Aorta (tissue), 5 donors: ENCODE measurements at regions of chr1 and their contacts with region 1.

Region 1: GRCh38 chr1:168092566-168093355 is 44.0 kb downstream of the GPR161 start:
- DNase-seq: no peak
- ATAC-seq: no peak
- H3K4me3 ChIP-seq: no peak overlapping the region
- H3K27ac ChIP-seq: no peak overlapping the region
- H3K4me1 ChIP-seq: no peaks in the 10 kb centered on the region
- H3K27me3 ChIP-seq: no peaks in the 10 kb centered on the region

Region 2: GRCh38 chr1:168312718-168313604 is 220.2 kb after region 1 on chr1:
- intact Hi-C with region 1: loop called in 1 of 2 experiments (anchors 10 kb)
- DNase-seq: no peak
- ATAC-seq: no peak
- H3K4me3 ChIP-seq: no peak overlapping the region
- H3K27ac ChIP-seq: no peak overlapping the region
- H3K4me1 ChIP-seq: no peaks in the 10 kb centered on the region
- H3K27me3 ChIP-seq: no peaks in the 10 kb centered on the region

Region 3: DNA sequence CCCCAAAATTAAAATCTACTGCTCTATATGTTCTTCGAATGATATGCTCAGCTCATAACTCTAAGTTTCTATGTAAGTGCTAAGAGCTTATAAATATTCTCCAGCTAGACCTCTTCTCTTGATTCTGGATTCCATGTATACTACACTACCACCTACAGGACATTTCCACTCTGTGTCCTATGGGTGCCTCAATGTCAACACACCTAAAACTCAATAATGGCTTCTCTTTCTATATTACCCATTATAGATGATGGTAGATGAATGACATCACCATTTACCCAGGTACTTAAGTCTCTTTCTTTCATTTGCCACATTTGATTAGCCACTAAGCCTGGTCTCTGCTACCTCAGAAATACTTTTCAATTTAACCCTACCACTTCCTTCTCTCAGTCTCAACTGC is 229.2 kb after region 1 on chr1:
- intact Hi-C with region 1: loop called (anchors 10 kb)
- DNase-seq: no peak
- ATAC-seq: no peak
- H3K4me3 ChIP-seq: no peak overlapping the region
- H3K27ac ChIP-seq: no peak overlapping the region
- H3K4me1 ChIP-seq: peaks cover 0 to 2% of the 10 kb centered on the region in 2 donors
- H3K27me3 ChIP-seq: no peaks in the 10 kb centered on the region